Adrenal gland (tissue), 19 donors: ENCODE measurements at regions of chr3 and their contacts with region 1.

Region 1: DNA sequence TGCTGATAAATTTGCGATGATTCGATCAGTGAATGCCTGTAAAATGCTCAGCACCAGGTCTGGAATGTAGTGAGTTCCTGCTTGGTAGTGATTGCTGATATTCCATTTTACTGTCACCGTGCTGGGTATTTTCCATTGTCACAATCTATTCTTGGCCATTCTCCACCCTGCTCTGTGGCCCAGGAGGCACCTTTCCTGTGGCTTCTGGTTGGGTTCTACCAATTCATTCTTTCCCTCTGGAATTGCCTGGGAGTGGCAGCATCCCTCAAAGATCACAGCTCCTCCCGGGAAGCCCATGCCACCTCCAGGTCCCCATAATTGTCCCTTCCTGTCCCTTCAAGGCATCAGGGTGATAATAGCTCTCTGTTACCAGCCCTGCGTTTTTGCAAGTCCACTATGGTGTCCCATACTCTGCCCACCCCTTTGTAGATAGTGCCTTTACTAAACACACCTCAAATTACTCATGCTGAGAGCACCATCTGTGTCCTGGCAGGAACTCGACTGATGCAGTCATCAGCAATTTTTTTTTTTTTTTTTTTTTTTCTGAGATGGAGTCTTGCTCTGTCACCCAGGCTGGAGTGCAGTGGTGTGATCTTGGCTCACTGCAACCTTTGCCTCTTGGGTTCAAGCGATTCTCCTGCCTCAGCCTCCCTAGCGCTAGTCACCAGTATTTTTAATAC is 177.8 kb upstream of the PROK2 start:
- DNase-seq: no peak
- H3K4me3 ChIP-seq: no peak overlapping the region
- H3K27ac ChIP-seq: no peak overlapping the region
- H3K4me1 ChIP-seq: no peaks in the 10 kb centered on the region
- H3K27me3 ChIP-seq: no peaks in the 10 kb centered on the region
- CTCF ChIP-seq: no peak
- POLR2A ChIP-seq: no peak

Region 2: GRCh38 chr3:71201939-71202338 is 760.8 kb before region 1 on chr3:
- intact Hi-C with region 1: no loop called
- DNase-seq: peak; percentile 40 to 77 (median 61)
- H3K4me3 ChIP-seq: no peak overlapping the region
- H3K27ac ChIP-seq: no peak overlapping the region
- H3K4me1 ChIP-seq: peaks cover 0 to 5% of the 10 kb centered on the region in 2 donors
- H3K27me3 ChIP-seq: no peaks in the 10 kb centered on the region
- CTCF ChIP-seq: no peak
- POLR2A ChIP-seq: no peak

Region 3: DNA sequence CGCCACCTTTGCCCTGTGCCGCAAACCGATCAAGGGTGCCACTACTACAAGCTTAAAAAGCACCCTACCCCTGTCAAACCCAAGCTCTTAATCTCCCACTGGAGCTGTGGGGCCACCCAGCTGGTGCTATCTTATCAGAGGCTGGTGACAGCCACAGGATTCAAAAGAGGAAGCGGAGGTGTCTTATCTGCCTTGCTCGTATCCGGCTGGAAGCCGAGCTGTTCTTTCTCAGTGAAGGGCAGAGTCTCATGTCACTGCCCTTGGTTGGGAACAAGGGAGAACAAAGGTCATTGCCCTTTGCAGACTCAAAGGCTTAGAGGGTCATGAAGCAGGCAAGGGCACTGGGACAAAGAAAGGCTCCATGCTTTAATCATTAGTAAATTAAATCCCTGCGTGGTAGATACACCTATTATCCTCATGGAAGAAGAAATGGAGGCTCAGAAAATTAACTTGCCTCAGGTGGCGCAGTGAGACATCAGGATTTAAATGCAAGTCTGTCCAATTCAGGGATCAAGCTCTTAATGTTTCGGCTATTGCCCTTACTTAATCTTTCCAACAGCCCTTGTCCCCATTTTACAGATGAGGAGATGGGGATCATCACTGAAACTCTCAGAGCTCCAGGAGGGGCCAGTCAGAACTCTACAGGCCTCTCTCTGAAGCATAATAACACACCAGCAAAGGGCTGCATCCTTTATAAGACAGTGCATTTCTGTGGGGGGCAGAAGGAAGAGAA is 182.2 kb after region 1 on chr3:
- intact Hi-C with region 1: no loop called
- DNase-seq: peak in 6 of 7 donors; percentile 31 to 69 (median 51)
- H3K4me3 ChIP-seq: no peak overlapping the region
- H3K27ac ChIP-seq: no peak overlapping the region
- H3K4me1 ChIP-seq: peaks cover 0 to 8% of the 10 kb centered on the region in 2 donors
- H3K27me3 ChIP-seq: peaks cover 3% of the 10 kb centered on the region
- CTCF ChIP-seq: no peak
- POLR2A ChIP-seq: no peak

Region 4: GRCh38 chr3:72255791-72256559 is 293.3 kb after region 1 on chr3:
- intact Hi-C with region 1: loop called in 1 of 2 experiments (anchors 5 kb)
- DNase-seq: peak in 3 of 7 donors; percentile 25 to 41 (median 32)
- H3K4me3 ChIP-seq: no peak overlapping the region
- H3K27ac ChIP-seq: no peak overlapping the region
- H3K4me1 ChIP-seq: peaks cover 8 to 11% of the 10 kb centered on the region in 2 donors
- H3K27me3 ChIP-seq: no peaks in the 10 kb centered on the region
- CTCF ChIP-seq: no peak
- POLR2A ChIP-seq: no peak

Region 5: DNA sequence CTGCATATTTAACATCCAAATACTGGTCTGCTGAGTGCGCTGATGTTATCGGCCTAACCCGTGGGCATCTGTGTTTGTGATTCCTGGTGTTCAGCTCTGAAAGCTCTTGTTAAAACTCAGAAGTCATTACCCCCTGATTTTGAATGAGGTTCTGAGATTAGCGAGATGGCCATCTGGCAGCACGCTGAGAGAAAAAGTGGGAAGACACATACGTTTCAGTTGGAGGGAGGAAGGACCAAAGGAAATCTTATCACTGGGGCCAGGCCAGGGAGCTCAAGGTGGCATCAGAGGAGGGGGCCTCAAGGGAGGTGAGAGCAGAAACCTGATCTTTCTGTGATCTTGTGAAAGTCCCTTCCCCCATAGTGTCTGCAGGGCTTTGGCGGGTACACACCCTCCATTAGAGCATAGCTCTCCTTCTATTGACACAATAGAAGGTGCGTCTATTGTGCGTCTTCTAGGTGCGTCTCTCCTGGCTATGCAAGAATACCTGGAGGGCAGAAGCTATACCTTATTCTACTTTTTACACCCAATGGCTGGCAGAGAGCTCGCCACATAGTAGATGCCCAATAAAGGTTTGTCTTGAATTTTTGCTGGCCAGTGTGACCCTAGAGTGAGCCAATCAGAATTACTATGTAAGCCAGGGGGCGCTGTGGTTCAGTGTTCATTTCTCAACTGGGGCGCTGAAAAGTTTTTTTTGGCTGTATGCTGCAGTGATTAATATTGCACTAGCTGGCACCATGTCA is 703.2 kb after region 1 on chr3:
- intact Hi-C with region 1: loop called in 1 of 2 experiments (anchors 10 kb)
- DNase-seq: peak; percentile 33 to 79 (median 64)
- H3K4me3 ChIP-seq: no peak overlapping the region
- H3K27ac ChIP-seq: no peak overlapping the region
- H3K4me1 ChIP-seq: no peaks in the 10 kb centered on the region
- H3K27me3 ChIP-seq: no peaks in the 10 kb centered on the region
- CTCF ChIP-seq: peak; percentile 47 to 64 (median 62)
- POLR2A ChIP-seq: no peak